Activated naive CD4-positive, alpha-beta T cell treated with anti-CD3 and anti-CD28 coated beads for 36 hours (primary cell): ENCODE measurements at regions of chr12 and their contacts with region 1.

Region 1: DNA sequence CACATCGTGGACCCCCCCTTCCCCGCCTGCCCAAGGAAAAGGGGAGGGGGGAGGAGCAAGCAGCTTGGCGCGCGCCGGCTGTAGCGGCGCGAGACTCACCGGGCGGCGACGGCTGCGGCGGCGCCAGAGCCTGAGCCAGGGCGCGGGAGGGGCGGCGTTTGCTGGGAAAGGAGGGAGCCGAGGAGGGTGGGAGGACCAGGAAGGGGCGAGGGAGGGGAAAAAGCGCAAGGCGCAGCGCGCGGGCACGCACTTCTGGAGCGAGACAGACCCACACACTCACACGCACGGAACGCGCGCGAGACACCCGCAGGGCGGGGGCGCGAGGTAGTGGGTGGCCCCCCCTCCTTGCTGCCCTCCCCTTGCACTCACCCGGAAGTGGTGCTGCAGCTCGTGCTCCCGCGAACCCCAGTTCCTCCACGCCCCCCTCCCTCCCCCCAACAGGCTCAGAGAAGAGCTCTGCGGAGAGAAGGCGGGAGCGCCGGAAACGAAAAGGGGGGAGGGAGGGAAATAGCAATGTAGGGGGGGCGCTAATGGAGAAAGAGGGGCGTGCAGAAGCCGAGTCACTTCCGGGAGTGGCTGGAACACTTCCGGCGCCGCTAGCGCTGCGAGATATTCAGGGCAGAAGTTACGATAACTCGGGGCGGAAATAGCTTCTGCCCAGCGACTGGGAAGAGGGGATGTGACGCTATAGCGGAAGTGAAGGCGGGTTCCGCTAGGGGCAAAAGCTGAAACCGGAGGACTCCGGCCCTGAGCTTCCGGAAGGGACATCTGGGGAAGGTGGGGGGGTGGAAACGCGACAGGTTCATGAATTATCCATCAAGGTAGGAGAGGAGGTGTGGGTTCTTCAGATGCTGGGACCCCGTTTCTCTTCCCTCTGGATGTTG is at the start of gene ZNF384:
- DNase-seq: peak; percentile 97
- H3K4me3 Mint-ChIP-seq: peak within 1 kb of the TSS; percentile 92
- H3K27ac Mint-ChIP-seq: peak within 1 kb of the TSS; percentile 95
- H3K4me1 Mint-ChIP-seq: peaks cover 52% of the 10 kb centered on the region
- H3K27me3 Mint-ChIP-seq: no peaks in the 10 kb centered on the region
- total RNA-seq, gene ZNF384: 52.6 to 56.6 TPM

Region 2: GRCh38 chr12:6430124-6430989 is 258.9 kb before region 1 on chr12:
- CTCF ChIA-PET with region 1: no interaction called
- intact Hi-C with region 1: loop called (anchors 1 kb)
- DNase-seq: peak; percentile 78
- H3K4me3 Mint-ChIP-seq: peak overlapping the region; percentile 46
- H3K27ac Mint-ChIP-seq: peak overlapping the region; percentile 84
- H3K4me1 Mint-ChIP-seq: peaks cover 85% of the 10 kb centered on the region
- H3K27me3 Mint-ChIP-seq: no peaks in the 10 kb centered on the region

Region 3: GRCh38 chr12:6563448-6564050 is 125.7 kb before region 1 on chr12:
- CTCF ChIA-PET with region 1: interaction called, 3 read pairs
- intact Hi-C with region 1: loop called (anchors 1 kb)
- DNase-seq: peak; percentile 79
- H3K4me3 Mint-ChIP-seq: no peak overlapping the region
- H3K27ac Mint-ChIP-seq: peak overlapping the region; percentile 36
- H3K4me1 Mint-ChIP-seq: peaks cover 39% of the 10 kb centered on the region
- H3K27me3 Mint-ChIP-seq: no peaks in the 10 kb centered on the region

Region 4: GRCh38 chr12:6620137-6620884 is 68.9 kb before region 1 on chr12:
- CTCF ChIA-PET with region 1: interaction called, 21 read pairs
- intact Hi-C with region 1: loop called (anchors 1 kb)
- DNase-seq: peak; percentile 67
- H3K4me3 Mint-ChIP-seq: peak overlapping the region; percentile 30
- H3K27ac Mint-ChIP-seq: no peak overlapping the region
- H3K4me1 Mint-ChIP-seq: peaks cover 8% of the 10 kb centered on the region
- H3K27me3 Mint-ChIP-seq: no peaks in the 10 kb centered on the region

Region 5: DNA sequence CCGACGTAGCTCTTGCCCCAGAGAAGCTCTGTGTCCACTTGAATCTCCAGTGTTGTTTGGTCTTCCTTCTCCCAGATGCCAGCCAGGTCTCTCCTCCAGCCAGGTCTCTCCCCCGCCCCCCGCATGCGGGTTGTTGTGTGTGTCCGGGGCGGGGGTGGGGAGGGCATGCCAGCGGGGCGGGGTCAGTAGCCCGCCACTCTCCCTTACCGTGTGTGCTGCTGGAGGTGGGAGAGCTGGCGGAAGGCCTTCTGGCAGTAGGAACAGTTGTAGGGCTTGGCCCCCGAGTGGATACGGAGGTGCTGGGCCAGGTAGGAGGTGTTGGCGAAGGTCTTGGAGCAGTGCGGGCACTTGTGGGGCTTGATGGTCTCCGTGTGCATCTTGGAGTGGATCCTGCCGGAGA is 17.1 kb before region 1 on chr12:
- CTCF ChIA-PET with region 1: interaction called, 12 read pairs
- intact Hi-C with region 1: no loop called
- DNase-seq: no peak
- H3K4me3 Mint-ChIP-seq: no peak overlapping the region
- H3K27ac Mint-ChIP-seq: no peak overlapping the region
- H3K4me1 Mint-ChIP-seq: no peaks in the 10 kb centered on the region
- H3K27me3 Mint-ChIP-seq: no peaks in the 10 kb centered on the region

Region 6: GRCh38 chr12:6778574-6779550 is 89.6 kb after region 1 on chr12:
- CTCF ChIA-PET with region 1: no interaction called
- intact Hi-C with region 1: loop called (anchors 2 kb)
- DNase-seq: peak; percentile 96
- H3K4me3 Mint-ChIP-seq: peak overlapping the region; percentile 82
- H3K27ac Mint-ChIP-seq: peak overlapping the region; percentile 63
- H3K4me1 Mint-ChIP-seq: peaks cover 89% of the 10 kb centered on the region
- H3K27me3 Mint-ChIP-seq: no peaks in the 10 kb centered on the region

Region 7: GRCh38 chr12:6965026-6965661 is 275.9 kb after region 1 on chr12:
- CTCF ChIA-PET with region 1: no interaction called
- intact Hi-C with region 1: loop called (anchors 1 kb)
- DNase-seq: peak; percentile 95
- H3K4me3 Mint-ChIP-seq: no peak overlapping the region
- H3K27ac Mint-ChIP-seq: peak overlapping the region; percentile 93
- H3K4me1 Mint-ChIP-seq: peaks cover 81% of the 10 kb centered on the region
- H3K27me3 Mint-ChIP-seq: no peaks in the 10 kb centered on the region